IMR-90 (cell line): ENCODE measurements at regions of chr19 and their contacts with region 1.

Region 1: GRCh38 chr19:2475702-2476450 is at the start of gene GADD45B:
- DNase-seq: peak; percentile 97
- ATAC-seq: peak; percentile 66
- H3K4me3 ChIP-seq: peak within 1 kb of the TSS; percentile 84
- H3K27ac ChIP-seq: peak within 1 kb of the TSS; percentile 76
- H3K4me1 ChIP-seq: peaks cover 4% of the 10 kb centered on the region; the same call in 1 of the 2 replicates
- H3K27me3 ChIP-seq: no peaks in the 10 kb centered on the region
- CTCF ChIP-seq: no peak
- POLR2A ChIP-seq: peak; percentile 100
- RAD21 ChIP-seq: peak; percentile 35; the same call in 1 of the 2 replicates
- total RNA-seq, gene GADD45B: 28.1 and 30.1 TPM in 2 replicates

Region 2: DNA sequence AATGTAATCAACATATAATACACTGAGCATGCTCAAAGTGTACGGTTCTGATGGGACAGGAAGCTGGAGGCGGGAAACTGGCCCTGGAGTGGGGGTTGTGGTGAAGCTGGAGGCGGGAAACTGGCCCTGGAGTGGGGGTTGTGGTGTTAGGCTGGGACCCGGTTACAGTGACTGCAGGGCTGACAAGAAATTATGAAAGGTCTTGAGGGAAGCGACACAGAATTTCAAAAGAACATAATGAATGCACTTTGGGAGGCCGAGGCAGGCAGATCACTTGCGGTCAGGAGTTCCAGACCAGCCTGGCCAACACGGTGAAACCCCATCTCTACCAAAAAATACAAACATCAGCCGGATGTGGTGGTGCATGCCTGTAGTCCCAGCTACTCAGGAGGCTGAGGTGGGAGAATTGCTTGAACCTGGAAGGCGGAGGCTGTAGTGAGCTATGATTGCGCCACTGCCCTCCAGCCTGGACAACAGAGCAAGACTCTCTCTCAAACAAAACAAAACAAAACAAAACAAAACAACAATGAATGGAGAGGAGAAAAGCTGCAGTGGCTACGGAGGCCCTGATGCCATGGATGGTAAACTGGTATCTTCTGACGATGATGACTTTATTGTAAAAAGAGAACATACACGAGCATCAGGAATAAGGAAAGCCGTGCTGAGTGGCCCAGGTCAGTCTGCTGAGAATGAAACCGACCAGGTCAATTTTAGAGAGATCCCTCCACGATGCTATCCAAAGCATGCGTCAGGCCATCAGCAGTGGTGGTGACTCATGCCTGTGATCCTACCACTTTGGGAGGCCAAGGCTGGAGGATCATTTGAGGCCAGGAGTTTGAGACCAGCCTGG is 61.9 kb after region 1 on chr19:
- CTCF ChIA-PET with region 1: no interaction called
- POLR2A ChIA-PET with region 1: interaction called, 23 read pairs
- dilution Hi-C with region 1: no loop called
- in situ Hi-C with region 1: loop called (anchors 5 kb)
- intact Hi-C with region 1: loop called (anchors 1 kb)
- DNase-seq: no peak
- ATAC-seq: no peak
- H3K4me3 ChIP-seq: no peak overlapping the region
- H3K27ac ChIP-seq: no peak overlapping the region
- H3K4me1 ChIP-seq: peaks cover 19% of the 10 kb centered on the region
- H3K27me3 ChIP-seq: no peaks in the 10 kb centered on the region
- CTCF ChIP-seq: no peak
- POLR2A ChIP-seq: no peak
- RAD21 ChIP-seq: no peak

Region 3: DNA sequence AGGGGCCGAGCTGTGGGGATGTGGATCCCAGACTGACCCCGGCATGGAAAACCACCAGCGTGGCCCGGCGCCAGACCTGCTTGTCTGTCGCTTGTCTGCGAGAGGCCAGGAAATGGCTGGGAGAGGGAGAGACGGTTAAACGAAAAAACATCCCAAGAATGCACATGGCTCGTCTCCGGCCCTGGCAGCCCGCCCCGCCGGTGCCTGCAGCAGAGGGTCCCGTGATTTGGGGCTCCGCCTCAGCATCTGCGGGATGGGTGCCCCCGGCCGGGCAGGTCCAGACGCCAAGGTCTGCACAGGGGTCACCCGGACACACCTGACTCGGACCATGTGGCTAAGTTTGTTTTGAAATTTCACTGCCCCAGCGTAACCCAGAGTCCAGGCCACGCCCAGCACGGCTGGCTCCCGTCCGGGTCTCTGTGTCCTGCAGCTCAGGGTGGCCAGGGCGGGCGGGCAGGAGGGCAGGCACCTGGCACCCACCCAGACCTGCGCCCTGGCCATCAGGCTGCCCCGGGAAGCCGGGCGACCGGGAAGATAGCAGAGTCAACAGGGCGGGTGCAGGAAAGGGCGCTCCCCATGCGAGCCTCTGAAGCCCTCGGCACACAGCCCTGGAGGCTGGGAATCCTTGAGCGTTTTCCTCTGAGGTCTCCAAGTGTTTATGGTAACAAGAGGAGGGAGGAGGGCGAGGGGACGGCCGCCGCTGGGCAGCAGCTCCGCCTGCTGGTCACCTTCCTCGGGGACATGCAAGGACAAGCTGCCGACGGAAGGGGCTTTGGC is 103.2 kb after region 1 on chr19:
- CTCF ChIA-PET with region 1: interaction called, 16 read pairs
- POLR2A ChIA-PET with region 1: interaction called, 63 read pairs
- dilution Hi-C with region 1: no loop called
- in situ Hi-C with region 1: no loop called
- intact Hi-C with region 1: loop called (anchors 1 kb)
- DNase-seq: peak; percentile 89
- ATAC-seq: peak; percentile 91
- H3K4me3 ChIP-seq: peak overlapping the region; percentile 44
- H3K27ac ChIP-seq: peak overlapping the region; percentile 75
- H3K4me1 ChIP-seq: peaks cover 15% of the 10 kb centered on the region
- H3K27me3 ChIP-seq: no peaks in the 10 kb centered on the region
- CTCF ChIP-seq: peak; percentile 92
- POLR2A ChIP-seq: peak; percentile 32; the same call in 1 of the 2 replicates
- RAD21 ChIP-seq: peak; percentile 96

Region 4: GRCh38 chr19:2602391-2603181 is 126.7 kb after region 1 on chr19:
- CTCF ChIA-PET with region 1: no interaction called
- POLR2A ChIA-PET with region 1: interaction called, 4 read pairs
- dilution Hi-C with region 1: no loop called
- in situ Hi-C with region 1: no loop called
- intact Hi-C with region 1: loop called (anchors 2 kb)
- DNase-seq: peak; percentile 81
- ATAC-seq: peak; percentile 74
- H3K4me3 ChIP-seq: peak overlapping the region; percentile 6; the same call in 1 of the 2 replicates
- H3K27ac ChIP-seq: 0 out of 2 replicates have a peak overlapping the region, but pooled peaks have one; percentile 38
- H3K4me1 ChIP-seq: no peaks in the 10 kb centered on the region; the same call in 1 of the 2 replicates
- H3K27me3 ChIP-seq: peaks cover under 1% of the 10 kb centered on the region; the same call in 1 of the 2 replicates
- CTCF ChIP-seq: no peak
- POLR2A ChIP-seq: no peak
- RAD21 ChIP-seq: no peak

Region 5: GRCh38 chr19:2636897-2637683 is 161.2 kb after region 1 on chr19:
- CTCF ChIA-PET with region 1: interaction called, 4 read pairs
- POLR2A ChIA-PET with region 1: interaction called, 13 read pairs
- dilution Hi-C with region 1: no loop called
- in situ Hi-C with region 1: no loop called
- intact Hi-C with region 1: no loop called
- DNase-seq: peak; percentile 31
- ATAC-seq: peak; percentile 91
- H3K4me3 ChIP-seq: no peak overlapping the region
- H3K27ac ChIP-seq: no peak overlapping the region
- H3K4me1 ChIP-seq: peaks cover 5% of the 10 kb centered on the region; the same call in 1 of the 2 replicates
- H3K27me3 ChIP-seq: peaks cover 16% of the 10 kb centered on the region
- CTCF ChIP-seq: peak; percentile 78
- POLR2A ChIP-seq: no peak
- RAD21 ChIP-seq: peak; percentile 76